PC-3 (cell line): ENCODE measurements at regions of chr10 and their contacts with region 1.

Region 1: GRCh38 chr10:80136081-80136571 is 3.6 kb downstream of the PLAC9 start:
- DNase-seq: peak; percentile 15
- ATAC-seq: peak; percentile 48
- H3K4me3 ChIP-seq: no peak overlapping the region
- H3K27ac ChIP-seq: no peak overlapping the region
- H3K4me1 ChIP-seq: peaks cover 14% of the 10 kb centered on the region
- H3K27me3 ChIP-seq: peaks cover 22% of the 10 kb centered on the region
- CTCF ChIP-seq: no peak

Region 2: DNA sequence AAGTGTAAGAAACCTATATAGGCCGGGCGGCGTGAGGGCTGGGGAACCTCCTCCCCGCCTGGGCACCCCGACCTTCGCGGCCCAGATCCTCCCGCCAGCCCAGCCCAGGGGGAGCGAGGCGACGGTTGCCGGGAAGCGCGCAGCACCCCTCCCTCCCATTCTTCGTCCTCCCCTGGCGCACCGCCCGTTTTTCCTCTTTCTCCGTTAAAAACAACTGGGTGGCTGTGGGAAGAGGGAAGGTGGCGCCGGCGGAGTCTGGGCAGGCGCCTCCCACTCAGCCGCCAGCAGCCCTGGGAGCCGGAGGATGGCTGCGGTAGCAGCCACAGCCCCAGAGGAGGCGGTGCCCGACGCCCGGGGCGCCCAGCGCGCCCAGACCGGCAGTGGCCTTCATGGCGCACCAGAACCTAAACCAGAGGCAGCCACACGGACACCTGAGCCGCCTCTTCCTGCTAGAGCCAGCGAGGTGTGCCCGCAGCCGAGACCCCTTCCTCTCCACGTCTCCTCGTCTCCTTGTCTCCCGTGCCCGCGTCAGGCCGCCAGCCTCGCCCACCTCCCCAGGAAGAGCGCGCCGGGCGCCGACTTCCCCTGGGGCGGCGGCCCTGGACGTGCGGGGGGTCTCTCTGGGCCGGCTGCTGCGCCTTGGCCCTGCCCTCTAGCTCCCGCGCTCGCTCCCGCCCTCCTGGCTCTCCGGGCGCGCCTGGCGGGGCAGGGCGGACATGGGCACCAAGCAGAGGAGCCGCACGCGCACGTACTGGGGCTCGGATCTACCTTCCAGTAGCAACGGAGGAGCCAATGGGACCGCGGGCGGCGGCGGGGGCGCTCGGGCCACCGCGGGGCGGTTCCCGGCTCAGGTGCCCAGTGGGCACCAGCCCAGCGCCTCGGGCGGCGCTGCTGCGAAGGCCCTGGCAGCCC is 154.4 kb before region 1 on chr10:
- CTCF ChIA-PET with region 1: no interaction called
- POLR2A ChIA-PET with region 1: no interaction called
- intact Hi-C with region 1: loop called (anchors 5 kb)
- DNase-seq: peak; percentile 97
- ATAC-seq: peak; percentile 83
- H3K4me3 ChIP-seq: peak overlapping the region; percentile 74
- H3K27ac ChIP-seq: no peak overlapping the region
- H3K4me1 ChIP-seq: peaks cover 32% of the 10 kb centered on the region
- H3K27me3 ChIP-seq: no peaks in the 10 kb centered on the region
- CTCF ChIP-seq: peak; percentile 46

Region 3: GRCh38 chr10:79995979-79996634 is 140.0 kb before region 1 on chr10:
- CTCF ChIA-PET with region 1: no interaction called
- POLR2A ChIA-PET with region 1: no interaction called
- intact Hi-C with region 1: no loop called
- DNase-seq: no peak
- ATAC-seq: peak; percentile 41
- H3K4me3 ChIP-seq: no peak overlapping the region
- H3K27ac ChIP-seq: no peak overlapping the region
- H3K4me1 ChIP-seq: peaks cover 6% of the 10 kb centered on the region
- H3K27me3 ChIP-seq: peaks cover 18% of the 10 kb centered on the region
- CTCF ChIP-seq: no peak

Region 4: DNA sequence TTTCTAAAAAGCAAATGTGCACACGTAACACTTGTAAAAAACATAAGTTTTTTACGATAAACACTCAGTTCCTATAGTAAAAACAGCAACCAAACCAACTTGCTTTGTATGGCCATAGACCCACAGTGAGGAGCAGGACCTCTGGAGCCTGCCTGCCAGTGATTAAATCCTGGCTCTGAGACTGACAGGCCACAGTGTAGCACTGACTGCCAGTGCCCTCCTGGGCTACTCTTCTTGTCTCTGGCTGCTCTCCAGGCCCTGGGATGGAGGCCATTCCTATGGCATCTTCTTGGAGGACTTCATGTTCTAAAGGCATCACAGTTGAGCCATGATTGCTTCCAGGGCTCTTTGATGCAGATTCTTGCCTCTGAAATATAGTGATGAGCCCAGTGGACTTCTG is 80.4 kb before region 1 on chr10:
- CTCF ChIA-PET with region 1: interaction called, 56 read pairs
- POLR2A ChIA-PET with region 1: interaction called, 15 read pairs
- intact Hi-C with region 1: no loop called
- DNase-seq: no peak
- ATAC-seq: no peak
- H3K4me3 ChIP-seq: no peak overlapping the region
- H3K27ac ChIP-seq: no peak overlapping the region
- H3K4me1 ChIP-seq: no peaks in the 10 kb centered on the region
- H3K27me3 ChIP-seq: no peaks in the 10 kb centered on the region
- CTCF ChIP-seq: no peak

Region 5: GRCh38 chr10:80064120-80064886 is 71.8 kb before region 1 on chr10:
- CTCF ChIA-PET with region 1: interaction called, 56 read pairs
- POLR2A ChIA-PET with region 1: no interaction called
- intact Hi-C with region 1: no loop called
- DNase-seq: no peak
- ATAC-seq: no peak
- H3K4me3 ChIP-seq: no peak overlapping the region
- H3K27ac ChIP-seq: no peak overlapping the region
- H3K4me1 ChIP-seq: no peaks in the 10 kb centered on the region
- H3K27me3 ChIP-seq: no peaks in the 10 kb centered on the region
- CTCF ChIP-seq: no peak